Mammary epithelial cell (primary cell): ENCODE measurements at regions of chrX and their contacts with region 1.

Region 1: GRCh38 chrX:133620737-133621136 is 205.4 kb upstream of the GPC4 start:
- DNase-seq: no peak
- H3K4me3 ChIP-seq: no peak overlapping the region
- H3K27ac ChIP-seq: no peak overlapping the region
- H3K4me1 ChIP-seq: no peaks in the 10 kb centered on the region
- H3K27me3 ChIP-seq: no peaks in the 10 kb centered on the region
- CTCF ChIP-seq: no peak

Region 2: GRCh38 chrX:133229361-133229760 is 391.4 kb before region 1 on chrX:
- CTCF ChIA-PET with region 1: no interaction called
- dilution Hi-C with region 1: no loop called
- in situ Hi-C with region 1: no loop called
- intact Hi-C with region 1: no loop called
- DNase-seq: peak; percentile 85
- H3K4me3 ChIP-seq: no peak overlapping the region
- H3K27ac ChIP-seq: no peak overlapping the region
- H3K4me1 ChIP-seq: peaks cover 12% of the 10 kb centered on the region
- H3K27me3 ChIP-seq: no peaks in the 10 kb centered on the region
- CTCF ChIP-seq: no peak

Region 3: DNA sequence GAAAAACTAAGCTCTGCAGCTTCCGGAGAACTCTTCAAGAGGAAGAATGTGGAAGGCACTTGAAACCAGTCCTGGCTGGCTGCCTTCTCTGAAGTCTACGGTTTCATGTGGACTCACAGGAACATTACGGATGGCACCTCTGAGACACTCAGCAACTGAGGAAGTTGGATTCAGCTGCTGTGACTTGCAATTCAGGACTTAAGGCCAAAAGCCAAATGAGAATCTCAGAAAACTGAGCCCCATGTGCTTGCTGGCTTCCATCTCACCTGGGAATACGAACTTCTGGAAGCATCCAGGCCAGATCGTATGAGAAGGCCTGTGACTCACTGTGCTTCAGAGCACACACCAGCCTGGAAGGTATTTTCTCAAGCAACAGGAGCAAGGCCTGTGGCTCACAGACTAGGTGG is 97.7 kb before region 1 on chrX:
- CTCF ChIA-PET with region 1: no interaction called
- dilution Hi-C with region 1: loop called (anchors 5 kb)
- in situ Hi-C with region 1: no loop called
- intact Hi-C with region 1: no loop called
- DNase-seq: peak; percentile 72
- H3K4me3 ChIP-seq: no peak overlapping the region
- H3K27ac ChIP-seq: peak overlapping the region; percentile 39
- H3K4me1 ChIP-seq: peaks cover 5% of the 10 kb centered on the region
- H3K27me3 ChIP-seq: no peaks in the 10 kb centered on the region
- CTCF ChIP-seq: no peak